Activated T-helper 2 cell treated with anti-CD3 and anti-CD28 coated beads, Interferon-gamma antibody, Interleukin-2, Interleukin-4, amounts not matched to agents 10 μg/mL and 5 μg/mL and 100 μg/mL, durations not matched to agents 14 hours and 24 hours and 36 hours (primary cell): ENCODE measurements at regions of chr1 and their contacts with region 1.

Region 1: DNA sequence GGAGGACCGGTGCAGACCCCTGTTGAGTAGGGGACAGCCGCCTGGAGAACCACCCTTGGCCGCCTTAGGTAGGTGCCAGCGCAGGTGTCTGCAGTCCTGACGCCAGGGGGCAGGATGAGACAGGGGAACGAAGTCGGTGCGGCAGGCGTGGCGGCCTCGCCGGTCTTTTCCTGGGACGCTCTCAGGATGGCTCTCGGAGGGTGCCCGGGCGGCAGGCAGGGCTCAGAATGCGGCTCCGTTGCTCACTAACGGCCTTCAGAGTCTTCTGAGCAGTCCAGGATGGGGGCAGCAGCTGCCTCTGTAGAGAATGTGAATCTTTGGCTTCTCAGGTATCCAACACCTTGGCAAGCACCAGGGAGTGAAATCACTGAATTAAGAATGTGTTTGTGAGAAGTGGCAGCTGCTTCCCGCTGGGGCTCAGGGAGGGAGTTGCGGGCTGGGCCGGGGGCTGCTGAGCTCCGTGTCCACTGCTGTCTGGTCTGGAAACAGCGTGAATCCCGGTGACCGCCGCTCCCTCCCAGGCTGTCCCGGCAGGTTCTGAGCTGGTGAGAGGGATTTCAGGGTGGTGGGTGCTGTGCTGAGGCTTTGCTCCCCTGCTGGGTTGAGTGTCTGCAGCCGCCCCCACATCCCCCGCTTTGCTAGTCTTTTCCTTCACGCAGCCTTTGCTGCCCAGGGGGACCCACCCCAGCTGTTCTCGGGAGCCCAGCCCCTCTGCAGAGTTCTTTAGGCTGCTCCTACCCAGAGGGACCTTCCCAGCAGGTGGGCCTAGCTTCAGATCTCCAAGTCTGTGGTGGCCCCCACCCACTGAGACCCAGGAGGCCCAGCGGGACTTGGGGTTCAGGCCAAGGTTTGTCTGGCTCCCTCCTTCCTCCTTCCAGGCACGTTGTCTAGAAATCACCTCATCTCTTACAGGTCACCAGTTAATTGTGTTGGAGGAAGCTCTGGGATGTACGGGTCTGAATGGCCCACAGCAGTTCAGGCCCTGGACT is 11.1 kb upstream of the C1orf174 start:
- DNase-seq: peak; percentile 61
- H3K4me3 Mint-ChIP-seq: no peak overlapping the region
- H3K27ac Mint-ChIP-seq: no peak overlapping the region
- H3K4me1 Mint-ChIP-seq: peaks cover 4% of the 10 kb centered on the region
- H3K27me3 Mint-ChIP-seq: no peaks in the 10 kb centered on the region

Region 2: GRCh38 chr1:4652631-4653327 is 741.6 kb after region 1 on chr1:
- intact Hi-C with region 1: loop called (anchors 5 kb)
- DNase-seq: peak; percentile 44
- H3K4me3 Mint-ChIP-seq: no peak overlapping the region
- H3K27ac Mint-ChIP-seq: no peak overlapping the region
- H3K4me1 Mint-ChIP-seq: peaks cover 2% of the 10 kb centered on the region
- H3K27me3 Mint-ChIP-seq: peaks cover 29% of the 10 kb centered on the region